ENCODE measurements at regions of chr21 and their contacts with region 1.

Region 1: DNA sequence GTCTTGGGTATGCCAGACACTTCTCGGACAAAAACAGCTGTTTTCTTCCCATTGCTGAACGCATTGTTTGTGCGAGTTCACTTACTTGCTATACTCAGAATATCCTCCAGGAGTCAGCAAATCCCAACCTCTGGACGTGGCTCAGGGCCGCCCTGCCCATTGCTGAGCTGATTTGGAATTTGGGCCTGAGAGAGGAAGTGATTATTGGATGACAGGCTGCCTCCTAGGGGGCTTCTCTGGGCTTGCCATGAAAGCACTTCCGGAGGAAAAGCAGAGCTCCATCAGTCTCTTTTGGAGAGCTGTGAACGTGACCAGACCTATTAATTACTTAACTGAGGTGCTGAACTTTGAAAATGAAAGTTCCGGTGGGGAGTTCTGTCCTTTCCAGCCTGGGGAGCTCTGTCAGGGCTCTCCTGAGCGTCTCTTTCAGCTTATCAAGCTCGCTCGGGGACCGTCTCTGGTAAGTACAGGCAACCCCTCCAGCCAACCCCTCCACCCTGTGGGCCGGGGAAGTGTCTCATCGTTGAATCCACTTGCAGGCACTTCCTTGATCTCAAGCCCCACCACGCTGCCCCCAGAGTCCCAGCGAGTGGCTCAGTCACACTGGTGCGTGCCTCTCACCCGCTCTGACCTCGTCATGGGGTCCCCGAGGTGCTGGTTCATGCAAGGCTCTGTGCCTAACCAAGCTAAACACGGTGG is 76.9 kb downstream of the CLIC6 start:
- DNase-seq: peak; percentile 79
- CTCF ChIP-seq: peak; percentile 83

Region 2: GRCh38 chr21:35204850-35205541 is 459.3 kb after region 1 on chr21:
- in situ Hi-C with region 1: no loop called
- DNase-seq: peak; percentile 37
- CTCF ChIP-seq: no peak

Region 3: DNA sequence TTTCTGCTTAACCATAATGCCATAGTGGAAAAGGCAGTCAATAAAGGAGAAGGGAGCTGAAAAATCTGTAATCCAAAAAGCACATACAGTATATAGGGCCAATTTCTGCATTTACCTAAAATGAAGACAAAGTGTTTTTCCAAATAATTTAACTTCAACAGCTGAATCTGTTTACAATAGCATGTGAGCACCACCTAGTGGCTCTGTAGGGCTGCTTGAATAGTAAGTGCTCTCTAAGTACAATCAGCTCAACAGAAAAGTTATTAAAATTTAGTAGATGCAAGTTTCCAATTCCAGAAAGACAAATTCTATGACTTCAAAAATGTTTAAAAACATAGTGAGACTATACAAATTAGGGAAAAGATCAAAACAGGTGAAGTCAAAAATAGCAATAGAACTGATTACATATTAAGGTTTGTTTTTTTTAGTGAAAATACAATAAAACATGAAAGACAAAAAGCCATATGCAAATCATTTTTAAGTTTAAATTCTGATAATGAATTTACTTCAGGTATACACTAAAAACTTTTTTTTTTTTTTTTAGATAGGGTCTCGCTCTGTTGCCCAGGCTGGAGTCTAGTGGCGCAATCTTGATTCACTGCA is 1094.6 kb after region 1 on chr21:
- in situ Hi-C with region 1: loop called (anchors 25 kb)
- DNase-seq: peak; percentile 36
- CTCF ChIP-seq: peak; percentile 74